Colonic mucosa (tissue), 4 donors: ENCODE measurements at regions of chr3 and their contacts with region 1.

Region 1: GRCh38 chr3:94062431-94063404 is at the starts of genes DHFR2 and NSUN3:
- DNase-seq: peak; percentile 93
- H3K4me3 ChIP-seq: peak within 1 kb of the TSS; percentile 54
- H3K27ac ChIP-seq: peak within 1 kb of the TSS; percentile 96
- H3K4me1 ChIP-seq: peaks cover 19% of the 10 kb centered on the region
- H3K27me3 ChIP-seq: no peaks in the 10 kb centered on the region
- CTCF ChIP-seq: no peak
- total RNA-seq, gene DHFR2: 4.6 to 5.4 TPM
- total RNA-seq, gene NSUN3: 17.2 to 18.8 TPM

Region 2: DNA sequence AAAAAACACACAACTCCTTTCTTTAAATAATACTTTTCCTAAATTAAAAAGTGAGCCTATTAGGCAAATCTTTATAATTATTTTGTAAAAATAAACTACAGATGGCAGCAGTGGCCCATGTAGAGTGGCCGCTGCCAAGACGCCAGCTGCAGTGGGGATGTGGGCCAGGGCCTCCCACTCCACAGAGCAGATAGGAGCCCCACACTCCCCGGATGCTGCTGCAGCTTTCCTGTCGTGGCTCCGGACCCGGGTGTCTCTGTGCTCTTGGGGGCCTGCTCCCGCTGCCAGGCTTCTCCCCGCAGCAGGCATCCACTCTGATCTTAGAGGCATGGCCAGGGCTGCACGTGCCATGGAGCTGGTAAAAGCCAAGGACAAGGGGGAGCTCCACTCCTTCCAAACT is 156.5 kb before region 1 on chr3:
- intact Hi-C with region 1: loop called (anchors 10 kb)
- DNase-seq: no peak
- H3K4me3 ChIP-seq: no peak overlapping the region
- H3K27ac ChIP-seq: no peak overlapping the region
- H3K4me1 ChIP-seq: no peaks in the 10 kb centered on the region
- H3K27me3 ChIP-seq: no peaks in the 10 kb centered on the region
- CTCF ChIP-seq: no peak

Region 3: GRCh38 chr3:94226078-94226477 is 163.4 kb after region 1 on chr3:
- intact Hi-C with region 1: no loop called
- DNase-seq: no peak
- H3K4me3 ChIP-seq: no peak overlapping the region
- H3K27ac ChIP-seq: no peak overlapping the region
- H3K4me1 ChIP-seq: no peaks in the 10 kb centered on the region
- H3K27me3 ChIP-seq: no peaks in the 10 kb centered on the region
- CTCF ChIP-seq: no peak